ENCODE measurements at regions of chr21 and their contacts with region 1.

Region 1: DNA sequence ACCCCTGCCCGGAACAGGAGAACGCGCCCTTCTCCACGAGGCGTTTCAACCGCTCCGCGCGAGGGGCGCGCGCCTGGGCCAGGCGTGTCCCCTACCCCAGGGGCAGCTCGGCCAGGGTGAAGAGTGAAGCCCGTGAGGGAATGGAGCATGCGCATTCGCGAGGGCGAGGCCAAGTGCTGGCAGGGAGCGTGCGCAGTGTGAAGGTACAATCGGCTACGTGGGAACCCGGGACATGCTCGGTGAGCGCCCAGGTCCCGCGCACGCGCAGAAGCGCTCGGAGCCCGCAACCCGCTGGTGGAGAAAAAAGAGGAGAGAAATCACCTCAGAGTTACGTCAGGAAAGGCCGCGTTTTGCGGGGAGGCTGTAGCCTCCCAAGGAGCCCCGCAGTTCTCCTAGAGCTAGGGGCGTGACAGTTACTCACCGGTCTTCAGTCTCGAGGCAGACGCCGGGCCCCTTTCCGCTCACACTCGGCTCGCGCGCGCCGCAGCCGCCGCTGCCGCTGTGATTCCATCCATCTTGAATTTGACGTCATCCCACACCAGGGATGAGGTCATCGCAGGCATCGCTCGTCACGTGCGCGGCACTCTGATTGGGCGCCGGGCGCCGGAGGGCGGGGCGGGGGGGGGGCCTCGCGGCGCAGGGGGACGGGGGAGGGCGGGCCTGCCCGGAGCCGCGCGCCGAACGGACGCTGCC is at the start of gene ZBTB21:
- DNase-seq: peak; percentile 98
- H3K4me3 Mint-ChIP-seq: peak within 1 kb of the TSS; percentile 98
- H3K27ac Mint-ChIP-seq: peak within 1 kb of the TSS; percentile 99
- H3K4me1 Mint-ChIP-seq: peaks cover 32% of the 10 kb centered on the region
- H3K27me3 Mint-ChIP-seq: no peaks in the 10 kb centered on the region
- total RNA-seq, gene ZBTB21: 27.8 to 28.0 TPM

Region 2: DNA sequence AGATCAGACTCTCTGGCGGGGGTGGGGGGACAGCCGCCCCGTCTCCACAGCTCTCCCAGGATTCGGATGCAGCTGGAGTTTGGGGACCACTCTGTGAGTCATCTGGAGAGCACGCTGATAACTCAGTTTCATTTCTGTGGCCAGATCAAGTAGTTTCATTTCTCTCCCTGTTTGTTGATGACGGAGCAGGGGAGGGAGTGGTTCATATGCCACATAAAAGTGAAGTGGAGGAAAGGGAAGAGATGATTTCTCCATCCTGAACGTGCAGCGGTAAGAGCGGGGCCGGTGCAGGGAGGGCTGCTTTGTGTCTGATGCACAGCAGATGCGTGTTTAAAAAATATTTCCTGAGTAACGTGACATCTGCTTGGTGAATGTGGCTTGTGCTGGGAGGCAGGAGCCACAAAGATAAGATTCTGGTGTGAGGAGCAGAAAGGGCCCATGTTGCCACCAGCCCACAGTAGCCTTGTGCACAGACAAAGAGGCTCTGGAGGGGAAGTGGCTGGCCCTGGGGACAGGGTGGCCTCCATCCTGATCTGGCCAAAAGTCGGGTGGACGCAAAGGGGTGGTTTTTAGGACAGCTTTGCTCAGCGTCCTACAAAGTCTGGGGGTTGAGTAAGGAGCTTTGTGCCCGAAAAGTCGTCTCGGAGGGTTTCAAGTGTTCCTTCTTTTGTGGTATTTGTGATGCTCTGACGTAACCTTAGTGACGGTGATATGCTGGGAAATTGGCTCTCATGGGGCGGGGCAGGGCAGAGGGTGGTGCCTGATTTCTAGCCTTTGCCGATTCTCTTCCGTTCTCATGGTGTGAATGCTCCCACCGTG is 648.0 kb before region 1 on chr21 and contains the start of gene MX2:
- CTCF ChIA-PET with region 1: no interaction called
- intact Hi-C with region 1: loop called (anchors 2 kb)
- DNase-seq: peak; percentile 89
- H3K4me3 Mint-ChIP-seq: peak within 1 kb of the TSS; percentile 80
- H3K27ac Mint-ChIP-seq: peak within 1 kb of the TSS; percentile 97
- H3K4me1 Mint-ChIP-seq: peaks cover 57% of the 10 kb centered on the region
- H3K27me3 Mint-ChIP-seq: no peaks in the 10 kb centered on the region
- total RNA-seq, gene MX2: 32.5 to 33.4 TPM

Region 3: GRCh38 chr21:41768437-41769061 is 241.4 kb before region 1 on chr21:
- CTCF ChIA-PET with region 1: no interaction called
- intact Hi-C with region 1: loop called (anchors 5 kb)
- DNase-seq: peak; percentile 35
- H3K4me3 Mint-ChIP-seq: peak overlapping the region; percentile 75
- H3K27ac Mint-ChIP-seq: no peak overlapping the region
- H3K4me1 Mint-ChIP-seq: peaks cover 21% of the 10 kb centered on the region
- H3K27me3 Mint-ChIP-seq: peaks cover 57% of the 10 kb centered on the region

Region 4: GRCh38 chr21:41802684-41803083 is 207.3 kb before region 1 on chr21:
- CTCF ChIA-PET with region 1: no interaction called
- intact Hi-C with region 1: no loop called
- DNase-seq: no peak
- H3K4me3 Mint-ChIP-seq: no peak overlapping the region
- H3K27ac Mint-ChIP-seq: peak overlapping the region; percentile 24
- H3K4me1 Mint-ChIP-seq: no peaks in the 10 kb centered on the region
- H3K27me3 Mint-ChIP-seq: no peaks in the 10 kb centered on the region

Region 5: DNA sequence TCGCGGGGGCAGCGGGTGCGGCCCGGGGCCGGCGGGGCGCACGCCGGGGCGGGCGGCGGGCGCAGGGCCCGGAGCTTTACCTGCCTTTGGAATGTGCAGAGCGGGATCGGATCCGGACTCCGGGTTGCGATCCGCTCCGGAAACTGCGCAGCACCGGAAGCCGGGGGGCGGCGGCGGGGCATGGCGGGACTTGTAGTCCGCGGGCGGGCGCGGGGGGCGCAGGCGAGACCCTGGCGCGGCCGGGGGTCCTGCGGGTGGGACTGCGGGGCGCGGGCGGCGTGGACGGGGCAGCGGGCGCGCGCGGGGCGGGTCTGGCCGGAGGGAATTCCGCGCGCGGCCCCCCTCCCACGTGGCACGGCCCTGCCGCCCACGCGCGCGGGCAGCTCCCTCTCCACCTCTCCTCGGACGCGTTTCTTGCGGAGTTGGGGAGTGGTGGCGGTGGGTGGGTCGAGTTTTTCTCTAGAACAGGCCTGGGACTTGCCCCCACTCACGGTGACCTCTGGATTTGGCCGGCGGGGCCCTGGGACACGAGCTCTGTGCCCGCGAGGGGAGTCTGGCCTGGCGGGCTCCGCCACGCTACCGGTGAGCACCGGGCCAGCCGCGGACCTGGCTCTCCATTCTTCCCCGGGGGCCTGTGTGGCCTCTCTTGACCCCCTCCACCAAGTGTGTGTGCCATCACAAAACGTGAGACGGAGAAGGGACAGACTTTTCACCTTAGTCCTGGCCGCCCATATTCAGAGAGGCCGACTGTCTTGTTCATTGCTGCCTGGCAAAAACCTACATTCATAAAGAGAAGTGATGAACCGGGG is 130.6 kb before region 1 on chr21 and contains the start of gene PRDM15:
- CTCF ChIA-PET with region 1: no interaction called
- intact Hi-C with region 1: loop called (anchors 1 kb)
- DNase-seq: peak; percentile 86
- H3K4me3 Mint-ChIP-seq: peak within 1 kb of the TSS; percentile 84
- H3K27ac Mint-ChIP-seq: peak within 1 kb of the TSS; percentile 91
- H3K4me1 Mint-ChIP-seq: peaks cover 15% of the 10 kb centered on the region
- H3K27me3 Mint-ChIP-seq: no peaks in the 10 kb centered on the region
- total RNA-seq, gene PRDM15: 9.6 to 9.8 TPM

Region 6: DNA sequence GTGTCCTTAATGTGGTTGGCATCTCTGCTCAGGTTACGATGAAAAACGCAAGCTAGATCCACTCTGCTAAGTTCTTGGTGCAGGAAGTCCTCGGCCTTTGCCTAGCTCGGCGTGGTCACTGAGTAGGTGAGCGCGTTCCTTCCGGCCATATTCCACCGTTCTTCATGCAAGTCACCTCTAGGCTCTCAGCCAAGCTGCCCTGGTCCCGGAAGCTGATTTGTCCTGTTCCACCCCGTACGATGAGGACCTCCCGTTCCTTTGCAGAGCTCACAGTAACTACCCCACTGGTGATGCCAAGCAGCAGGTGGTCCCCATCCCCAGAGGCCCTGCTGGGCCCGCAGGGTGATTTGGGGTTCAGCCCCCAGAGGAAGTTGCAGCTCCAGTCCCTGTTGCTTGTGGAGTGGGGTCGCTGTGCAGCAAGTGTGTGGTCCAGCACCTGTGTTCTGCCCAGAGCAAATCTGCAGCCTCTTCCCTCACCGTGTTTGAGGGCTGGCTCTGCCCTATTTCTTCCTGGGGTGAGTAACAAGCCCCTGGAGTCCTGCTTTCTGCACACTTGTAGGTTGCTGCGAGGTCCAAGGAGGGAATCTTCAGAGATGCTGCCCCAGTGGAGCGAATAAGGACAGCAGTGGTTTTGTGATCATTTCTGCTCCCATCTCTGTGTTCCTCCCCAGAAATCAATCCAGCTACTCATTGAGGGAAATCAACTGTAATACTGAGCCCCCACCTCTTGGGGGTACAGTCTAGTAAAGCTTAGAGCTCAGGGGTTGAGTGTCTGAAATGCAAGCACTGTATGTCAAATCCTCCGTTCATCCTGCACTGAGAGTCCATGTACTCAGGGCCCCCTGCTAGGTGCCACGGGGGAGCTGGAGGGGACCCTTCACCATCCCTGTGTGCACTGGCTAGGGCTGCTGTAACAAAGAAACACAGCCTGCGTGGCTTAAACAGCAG is 63.4 kb after region 1 on chr21:
- CTCF ChIA-PET with region 1: no interaction called
- intact Hi-C with region 1: no loop called
- DNase-seq: no peak
- H3K4me3 Mint-ChIP-seq: no peak overlapping the region
- H3K27ac Mint-ChIP-seq: no peak overlapping the region
- H3K4me1 Mint-ChIP-seq: peaks cover 1% of the 10 kb centered on the region
- H3K27me3 Mint-ChIP-seq: no peaks in the 10 kb centered on the region

Region 7: DNA sequence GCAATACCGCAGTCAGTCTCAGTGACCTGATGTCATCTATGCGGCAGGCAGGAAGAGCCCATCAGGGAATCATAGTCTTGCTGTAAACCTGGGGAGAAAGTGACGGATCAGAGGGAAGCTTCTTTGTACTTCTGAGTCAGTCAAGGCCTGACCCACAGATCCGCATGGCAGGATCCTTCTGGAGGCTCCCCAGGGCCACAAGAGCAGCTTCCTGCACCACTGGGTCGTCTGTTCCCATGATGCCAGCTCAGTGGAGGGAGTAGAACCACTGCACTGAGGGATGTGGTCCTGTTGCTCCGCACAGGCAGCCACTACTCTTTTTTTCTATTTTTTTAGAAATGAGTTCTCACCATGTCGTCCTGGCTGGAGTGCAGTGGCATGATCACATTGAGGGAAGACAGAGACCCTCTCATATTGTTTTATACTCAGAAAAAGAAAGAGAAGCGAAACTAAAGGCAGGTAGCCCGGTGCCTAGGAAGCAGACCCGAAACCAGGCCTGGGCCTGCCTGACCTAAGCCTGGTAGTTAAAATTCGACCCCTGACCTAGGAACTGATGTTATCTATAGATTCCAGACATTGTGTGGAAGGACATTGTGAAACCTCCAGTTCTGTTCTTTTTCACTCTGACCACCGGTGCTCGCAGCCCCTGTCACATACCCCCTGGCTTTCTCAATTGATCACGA is 921.7 kb after region 1 on chr21:
- CTCF ChIA-PET with region 1: no interaction called
- intact Hi-C with region 1: no loop called
- DNase-seq: no peak
- H3K4me3 Mint-ChIP-seq: no peak overlapping the region
- H3K27ac Mint-ChIP-seq: no peak overlapping the region
- H3K4me1 Mint-ChIP-seq: no peaks in the 10 kb centered on the region
- H3K27me3 Mint-ChIP-seq: no peaks in the 10 kb centered on the region

Region 8: DNA sequence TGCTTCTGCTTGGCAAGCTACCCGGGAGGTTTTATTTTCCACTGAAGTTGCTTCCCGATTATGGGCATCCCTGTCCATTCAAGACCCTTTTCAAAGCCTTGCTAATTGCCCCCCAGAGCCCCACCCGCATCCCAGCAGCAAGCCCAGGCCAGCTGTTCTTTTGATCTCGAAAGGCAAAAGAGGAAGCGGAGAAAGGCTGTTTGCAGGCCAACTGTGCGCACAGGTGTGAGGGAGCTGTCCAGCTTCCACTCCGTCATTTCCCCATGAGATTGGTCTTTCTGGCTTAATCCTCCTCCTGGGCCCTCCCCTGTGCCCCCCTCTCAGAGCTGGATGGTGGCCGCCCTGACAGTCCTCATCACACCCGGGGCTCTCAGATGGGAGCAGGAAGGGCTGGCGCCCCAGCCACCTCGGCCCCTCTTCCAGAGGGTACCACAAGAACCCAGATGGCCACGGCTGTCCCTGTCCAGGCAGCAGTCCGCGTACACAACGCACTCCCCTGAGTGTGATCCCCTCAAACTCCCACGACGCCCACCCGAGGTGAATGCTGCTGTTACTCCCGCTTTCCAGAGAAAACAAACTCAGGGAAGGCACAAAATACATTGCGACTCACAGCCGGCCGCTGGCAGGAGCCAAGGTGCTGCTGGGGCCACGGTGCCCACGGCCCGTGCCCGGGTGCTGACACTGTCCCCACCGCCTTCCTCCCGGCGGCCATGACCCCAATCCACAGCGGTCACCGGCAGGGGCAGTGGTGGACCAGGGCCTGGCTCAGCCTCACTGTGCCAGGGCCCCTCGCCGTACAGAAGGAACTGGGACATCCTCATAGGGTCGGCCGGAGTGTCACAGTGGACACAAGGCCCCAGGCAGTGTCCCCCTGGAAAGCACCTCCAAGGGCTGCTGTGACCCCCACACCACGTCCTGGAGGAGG is 1280.7 kb after region 1 on chr21:
- CTCF ChIA-PET with region 1: no interaction called
- intact Hi-C with region 1: no loop called
- DNase-seq: no peak
- H3K4me3 Mint-ChIP-seq: no peak overlapping the region
- H3K27ac Mint-ChIP-seq: no peak overlapping the region
- H3K4me1 Mint-ChIP-seq: peaks cover 4% of the 10 kb centered on the region
- H3K27me3 Mint-ChIP-seq: no peaks in the 10 kb centered on the region